Ascending aorta (tissue), 2 donors: ENCODE measurements at regions of chr21 and their contacts with region 1.

Region 1: GRCh38 chr21:39313571-39314142 is at the start of gene BRWD1:
- DNase-seq: peak in 1 of 2 donors; percentile 87
- H3K4me3 ChIP-seq: peak within 1 kb of the TSS; percentile 98 to 100
- H3K27ac ChIP-seq: peak within 1 kb of the TSS; percentile 91 to 99
- H3K4me1 ChIP-seq: peaks cover 0 to 16% of the 10 kb centered on the region in 2 donors
- H3K27me3 ChIP-seq: no peaks in the 10 kb centered on the region
- CTCF ChIP-seq: peak; percentile 25 to 54 (median 36)
- total RNA-seq, gene BRWD1: 15.4 TPM

Region 2: GRCh38 chr21:39348355-39349210 is 34.9 kb after region 1 on chr21 and contains the start of gene HMGN1:
- intact Hi-C with region 1: loop called (anchors 1 kb)
- DNase-seq: peak; percentile 25 to 87
- H3K4me3 ChIP-seq: peak within 1 kb of the TSS; percentile 72 to 82
- H3K27ac ChIP-seq: peak within 1 kb of the TSS; percentile 79 to 91
- H3K4me1 ChIP-seq: peaks cover 0 to 15% of the 10 kb centered on the region in 2 donors
- H3K27me3 ChIP-seq: no peaks in the 10 kb centered on the region
- CTCF ChIP-seq: peak in 1 of 3 experiments; percentile 22
- total RNA-seq, gene HMGN1: 22.7 TPM

Region 3: DNA sequence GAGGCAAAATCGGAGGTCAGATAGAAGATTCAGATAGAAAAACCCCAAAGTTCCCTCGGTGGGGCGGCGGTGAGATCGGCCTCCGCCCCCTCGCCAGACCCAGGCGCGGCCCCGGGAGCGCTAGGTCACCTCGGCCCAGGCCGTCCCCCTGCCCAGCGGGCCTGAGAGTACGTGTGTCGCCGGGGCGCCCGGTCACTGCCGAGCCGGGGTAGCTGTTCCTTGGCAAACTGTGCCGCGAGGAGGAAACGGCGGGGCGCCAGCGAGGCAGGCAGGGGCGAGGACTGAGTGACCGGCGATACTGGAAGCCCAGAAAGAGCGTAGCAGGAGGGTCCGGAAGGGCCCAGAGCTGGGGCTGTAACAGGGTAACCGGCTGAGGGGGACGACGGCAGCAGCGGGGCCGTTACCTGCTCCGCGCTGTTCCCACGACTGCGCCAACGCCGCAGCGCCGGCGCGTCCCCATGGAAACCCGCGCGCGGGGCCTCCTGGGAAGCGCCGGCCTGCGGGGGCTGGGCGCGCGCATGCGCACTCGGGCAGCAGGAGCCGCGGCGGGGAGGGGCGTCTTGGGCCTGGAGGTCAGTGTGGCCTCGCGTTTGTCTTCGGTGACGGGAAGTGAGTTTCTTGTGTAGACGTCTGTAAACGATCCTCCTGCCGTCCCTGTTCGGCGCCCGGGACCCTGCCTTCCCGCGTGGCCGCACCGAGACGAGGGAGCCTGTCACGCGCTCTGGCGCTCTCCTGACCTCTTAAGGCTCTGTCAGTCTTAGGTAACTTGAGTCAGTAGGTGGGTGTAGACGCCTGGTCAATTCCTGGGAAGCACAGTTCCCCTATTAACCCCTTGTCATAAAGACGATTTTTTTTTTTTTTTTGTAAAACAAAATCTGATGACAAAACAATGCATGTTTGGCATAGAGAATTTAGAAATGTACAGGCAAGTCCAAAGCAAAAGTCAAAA is 131.9 kb after region 1 on chr21 and contains the start of gene LCA5L:
- intact Hi-C with region 1: loop called (anchors 2 kb)
- DNase-seq: peak; percentile 51 to 95
- H3K4me3 ChIP-seq: peak within 1 kb of the TSS; percentile 76 to 82
- H3K27ac ChIP-seq: peak within 1 kb of the TSS; percentile 85 to 92
- H3K4me1 ChIP-seq: peaks cover 0 to 3% of the 10 kb centered on the region in 2 donors
- H3K27me3 ChIP-seq: no peaks in the 10 kb centered on the region
- CTCF ChIP-seq: peak in 1 of 3 experiments; percentile 15
- total RNA-seq, gene LCA5L: not detected

Region 4: DNA sequence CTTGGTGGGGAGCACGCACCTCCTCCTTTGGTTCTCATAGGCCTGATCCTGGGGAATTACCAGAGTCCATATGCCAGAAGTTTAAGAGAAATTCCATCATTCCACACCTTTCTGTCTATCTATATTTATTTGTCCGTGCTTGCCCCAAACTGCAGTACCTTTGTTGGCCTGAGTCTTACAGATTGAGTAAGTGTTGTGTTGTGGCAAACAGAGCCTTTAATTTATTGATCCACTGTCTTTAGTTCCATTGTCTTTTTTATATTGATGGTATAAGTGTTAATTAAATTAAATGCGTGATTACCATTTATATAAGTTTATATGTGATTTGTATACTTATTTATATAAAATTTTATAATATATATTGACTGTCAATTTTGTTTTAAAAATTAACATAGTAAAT is 143.0 kb after region 1 on chr21:
- intact Hi-C with region 1: no loop called
- DNase-seq: no peak
- H3K4me3 ChIP-seq: peak overlapping the region in 1 of 2 donors; percentile 33
- H3K27ac ChIP-seq: peak overlapping the region; percentile 27 to 90
- H3K4me1 ChIP-seq: peaks cover 0 to 7% of the 10 kb centered on the region in 2 donors
- H3K27me3 ChIP-seq: no peaks in the 10 kb centered on the region
- CTCF ChIP-seq: no peak